ENCODE measurements at regions of chr6 and their contacts with region 1.

Region 1: DNA sequence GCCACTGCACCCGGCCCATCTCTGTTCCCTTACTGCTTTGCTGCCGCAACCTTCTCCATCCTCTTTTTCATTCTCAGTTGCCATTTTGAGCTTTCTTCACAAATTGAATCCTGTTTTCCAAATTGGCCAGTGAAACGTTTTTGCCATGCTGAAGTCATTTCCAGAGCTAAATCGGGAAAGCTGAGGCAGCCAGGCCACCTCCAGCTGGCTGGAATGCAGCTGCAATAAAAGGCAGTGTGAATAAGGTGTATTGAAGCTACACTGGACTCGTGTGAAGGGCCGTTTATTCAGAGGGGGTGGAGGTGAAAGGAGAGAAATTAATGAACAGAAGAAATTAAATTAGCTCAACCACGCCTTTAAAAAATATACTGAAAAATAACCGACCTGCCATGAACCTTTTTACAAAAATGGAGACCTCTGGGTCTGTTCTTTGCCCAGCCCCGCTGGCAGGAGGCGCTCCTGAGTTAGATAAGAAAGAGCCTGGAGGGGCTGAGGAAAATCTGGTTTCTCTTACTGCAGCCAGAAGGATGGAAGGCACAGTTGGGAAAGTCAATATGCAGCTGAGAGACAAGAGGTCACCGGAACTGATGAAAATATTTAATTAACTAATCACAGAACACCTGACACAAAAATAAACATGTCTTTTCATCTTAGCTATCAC is 283.9 kb downstream of the FOXC1 start:
- DNase-seq: peak; percentile 64
- H3K4me3 Mint-ChIP-seq: no peak overlapping the region
- H3K27ac Mint-ChIP-seq: no peak overlapping the region
- H3K4me1 Mint-ChIP-seq: peaks cover 4% of the 10 kb centered on the region
- H3K27me3 Mint-ChIP-seq: no peaks in the 10 kb centered on the region

Region 2: GRCh38 chr6:2103644-2104523 is 210.3 kb after region 1 on chr6:
- intact Hi-C with region 1: loop called (anchors 10 kb)
- DNase-seq: no peak
- H3K4me3 Mint-ChIP-seq: no peak overlapping the region
- H3K27ac Mint-ChIP-seq: no peak overlapping the region
- H3K4me1 Mint-ChIP-seq: peaks cover 3% of the 10 kb centered on the region
- H3K27me3 Mint-ChIP-seq: no peaks in the 10 kb centered on the region

Region 3: DNA sequence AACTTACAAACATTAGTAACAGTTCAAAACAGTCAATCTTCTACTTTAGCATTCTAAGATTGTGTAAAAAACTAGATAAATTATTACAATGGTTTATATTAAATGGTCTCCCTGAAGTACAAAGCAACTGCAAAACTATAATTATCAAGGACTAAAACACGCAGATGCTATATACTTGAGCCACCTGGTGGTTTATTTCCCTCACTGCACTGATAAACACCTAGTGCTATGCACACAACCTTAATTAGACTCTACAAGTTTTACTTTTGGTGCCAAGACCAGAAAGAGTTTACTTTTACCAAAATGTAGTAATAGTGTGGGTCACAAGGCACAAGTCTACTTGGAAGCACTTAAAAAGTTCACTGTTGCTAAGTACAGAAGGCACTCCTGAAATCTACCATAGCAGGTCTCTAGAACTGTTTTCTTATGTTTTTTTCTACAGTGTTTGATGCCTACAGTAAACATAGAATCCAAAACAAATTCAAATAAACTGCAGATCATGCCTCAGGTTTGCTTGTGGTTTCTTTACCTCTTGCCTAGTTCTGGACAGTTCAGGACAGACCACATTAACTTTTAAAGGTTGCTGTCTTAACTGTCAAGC is 302.6 kb after region 1 on chr6:
- intact Hi-C with region 1: loop called (anchors 10 kb)
- DNase-seq: peak; percentile 80
- H3K4me3 Mint-ChIP-seq: no peak overlapping the region
- H3K27ac Mint-ChIP-seq: no peak overlapping the region
- H3K4me1 Mint-ChIP-seq: peaks cover 2% of the 10 kb centered on the region
- H3K27me3 Mint-ChIP-seq: peaks cover 3% of the 10 kb centered on the region

Measured in activated CD4-positive, alpha-beta T cell treated with anti-CD3 and anti-CD28 coated beads, Interleukin-2, amount 10 ng/mL, durations not matched to agents 24 days and 14 days (primary cell).